Natural killer cell (primary cell): ENCODE measurements at regions of chr7 and their contacts with region 1.

Region 1: GRCh38 chr7:55309040-55309991 is 55.8 kb upstream of the LANCL2 start:
- DNase-seq: peak; percentile 71 to 87
- ATAC-seq: peak; percentile 78 to 89 (median 87)
- H3K4me3 ChIP-seq: no peak overlapping the region
- H3K4me3 Mint-ChIP-seq: peak overlapping the region; percentile 65
- H3K27ac ChIP-seq: peak overlapping the region; percentile 75
- H3K27ac Mint-ChIP-seq: peak overlapping the region; percentile 90 to 94
- H3K4me1 ChIP-seq: peaks cover 45% of the 10 kb centered on the region
- H3K4me1 Mint-ChIP-seq: peaks cover 49% of the 10 kb centered on the region in 2 donors
- H3K27me3 ChIP-seq: peaks cover 20% of the 10 kb centered on the region
- H3K27me3 Mint-ChIP-seq: peaks cover 47 to 55% of the 10 kb centered on the region in 2 donors
- CTCF ChIP-seq: no peak

Region 2: GRCh38 chr7:55018361-55019190 is 290.7 kb before region 1 on chr7 and contains the start of gene EGFR:
- intact Hi-C with region 1: no loop called
- DNase-seq: no peak
- ATAC-seq: no peak
- H3K4me3 ChIP-seq: no peak within 1 kb of the TSS
- H3K4me3 Mint-ChIP-seq: peak within 1 kb of the TSS; percentile 37
- H3K27ac ChIP-seq: no peak within 1 kb of the TSS
- H3K27ac Mint-ChIP-seq: no peak within 1 kb of the TSS
- H3K4me1 ChIP-seq: peaks cover 9% of the 10 kb centered on the region
- H3K4me1 Mint-ChIP-seq: no peaks in the 10 kb centered on the region
- H3K27me3 ChIP-seq: peaks cover 21% of the 10 kb centered on the region
- H3K27me3 Mint-ChIP-seq: peaks cover 38 to 48% of the 10 kb centered on the region in 2 donors
- CTCF ChIP-seq: no peak
- total RNA-seq, gene EGFR: not detected

Region 3: DNA sequence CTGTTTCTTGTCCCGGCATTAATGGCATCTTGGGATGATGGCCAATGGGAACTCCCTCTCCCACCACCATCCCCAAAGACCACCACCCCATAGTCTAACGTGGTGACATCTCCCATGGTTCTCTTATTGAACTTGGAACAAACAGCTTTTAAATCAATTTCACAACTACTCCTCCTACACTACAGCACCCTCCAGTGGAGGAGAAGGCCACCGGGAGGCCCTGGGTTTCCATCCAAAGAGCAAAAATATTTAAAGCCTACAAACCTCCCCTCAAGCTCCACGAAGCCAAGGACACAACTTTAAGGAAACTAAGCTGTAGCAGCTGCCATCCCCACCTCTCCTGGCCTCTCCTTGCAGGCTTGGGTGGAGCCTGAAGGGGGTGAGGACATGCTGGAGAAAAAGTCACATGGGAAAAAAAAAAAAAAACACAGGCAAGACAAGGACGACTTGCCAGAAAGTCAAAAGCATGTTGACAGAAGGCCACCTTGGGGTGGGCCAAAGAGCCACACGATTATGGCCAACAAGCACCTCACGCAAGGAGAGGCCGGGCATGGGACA is 38.2 kb before region 1 on chr7:
- intact Hi-C with region 1: no loop called
- DNase-seq: no peak
- ATAC-seq: no peak
- H3K4me3 ChIP-seq: no peak overlapping the region
- H3K4me3 Mint-ChIP-seq: no peak overlapping the region
- H3K27ac ChIP-seq: no peak overlapping the region
- H3K27ac Mint-ChIP-seq: no peak overlapping the region
- H3K4me1 ChIP-seq: no peaks in the 10 kb centered on the region
- H3K4me1 Mint-ChIP-seq: no peaks in the 10 kb centered on the region
- H3K27me3 ChIP-seq: no peaks in the 10 kb centered on the region
- H3K27me3 Mint-ChIP-seq: peaks cover 8 to 26% of the 10 kb centered on the region in 2 donors
- CTCF ChIP-seq: no peak

Region 4: GRCh38 chr7:55348499-55348898 is 39.2 kb after region 1 on chr7:
- intact Hi-C with region 1: no loop called
- DNase-seq: no peak
- ATAC-seq: no peak
- H3K4me3 ChIP-seq: no peak overlapping the region
- H3K4me3 Mint-ChIP-seq: no peak overlapping the region
- H3K27ac ChIP-seq: no peak overlapping the region
- H3K27ac Mint-ChIP-seq: no peak overlapping the region
- H3K4me1 ChIP-seq: no peaks in the 10 kb centered on the region
- H3K4me1 Mint-ChIP-seq: no peaks in the 10 kb centered on the region
- H3K27me3 ChIP-seq: peaks cover 2% of the 10 kb centered on the region
- H3K27me3 Mint-ChIP-seq: peaks cover 39 to 52% of the 10 kb centered on the region in 2 donors
- CTCF ChIP-seq: no peak

Region 5: DNA sequence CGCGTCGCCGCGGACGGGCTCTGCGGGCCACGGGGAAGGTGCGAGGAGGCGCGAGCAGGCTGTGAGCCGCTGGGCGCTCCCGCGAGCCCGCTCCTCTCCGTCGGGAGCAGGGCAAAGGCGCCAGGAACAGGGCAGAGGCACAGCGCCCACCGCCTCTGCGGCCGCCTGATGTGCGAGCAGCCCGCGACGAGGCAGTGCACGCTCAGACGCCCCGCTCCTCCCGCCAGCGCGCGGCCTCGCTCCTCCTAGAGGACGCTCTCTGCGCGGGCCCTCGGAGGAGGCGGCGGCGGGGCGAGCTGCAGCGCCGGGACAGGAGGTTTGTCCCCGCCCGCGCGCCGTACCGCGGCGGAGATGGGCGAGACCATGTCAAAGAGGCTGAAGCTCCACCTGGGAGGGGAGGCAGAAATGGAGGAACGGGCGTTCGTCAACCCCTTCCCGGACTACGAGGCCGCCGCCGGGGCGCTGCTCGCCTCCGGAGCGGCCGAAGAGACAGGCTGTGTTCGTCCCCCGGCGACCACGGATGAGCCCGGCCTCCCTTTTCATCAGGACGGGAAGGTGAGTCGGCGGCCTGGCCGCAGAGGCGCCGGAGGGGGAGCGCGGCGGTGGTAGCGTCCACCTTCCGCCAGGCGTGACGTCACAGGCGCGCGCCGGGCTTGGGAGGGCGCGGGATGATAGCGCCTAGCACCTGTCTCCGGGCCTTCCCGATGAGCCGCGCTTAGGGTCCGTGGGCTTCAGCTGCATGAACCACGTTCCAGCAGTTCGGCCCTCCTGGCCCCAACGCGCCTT is 56.6 kb after region 1 on chr7:
- intact Hi-C with region 1: loop called (anchors 1 kb)
- DNase-seq: peak; percentile 97 to 98
- ATAC-seq: peak; percentile 85 to 97 (median 88)
- H3K4me3 ChIP-seq: peak overlapping the region; percentile 89
- H3K4me3 Mint-ChIP-seq: peak overlapping the region; percentile 96
- H3K27ac ChIP-seq: peak overlapping the region; percentile 98
- H3K27ac Mint-ChIP-seq: peak overlapping the region; percentile 97 to 100
- H3K4me1 ChIP-seq: peaks cover 13% of the 10 kb centered on the region
- H3K4me1 Mint-ChIP-seq: peaks cover 20 to 32% of the 10 kb centered on the region in 2 donors
- H3K27me3 ChIP-seq: no peaks in the 10 kb centered on the region
- H3K27me3 Mint-ChIP-seq: peaks cover 9 to 11% of the 10 kb centered on the region in 2 donors
- CTCF ChIP-seq: peak; percentile 37

Region 6: GRCh38 chr7:55415173-55415778 is 106.0 kb after region 1 on chr7:
- intact Hi-C with region 1: loop called (anchors 1 kb)
- DNase-seq: peak; percentile 70 to 90
- ATAC-seq: peak; percentile 94 to 100 (median 99)
- H3K4me3 ChIP-seq: no peak overlapping the region
- H3K4me3 Mint-ChIP-seq: no peak overlapping the region
- H3K27ac ChIP-seq: no peak overlapping the region
- H3K27ac Mint-ChIP-seq: no peak overlapping the region
- H3K4me1 ChIP-seq: no peaks in the 10 kb centered on the region
- H3K4me1 Mint-ChIP-seq: peaks cover 0 to 4% of the 10 kb centered on the region in 2 donors
- H3K27me3 ChIP-seq: no peaks in the 10 kb centered on the region
- H3K27me3 Mint-ChIP-seq: no peaks in the 10 kb centered on the region
- CTCF ChIP-seq: peak; percentile 92

Region 7: GRCh38 chr7:55534175-55534915 is 225.0 kb after region 1 on chr7:
- intact Hi-C with region 1: loop called (anchors 1 kb)
- DNase-seq: peak; percentile 49 to 71
- ATAC-seq: peak; percentile 46 to 74 (median 67)
- H3K4me3 ChIP-seq: no peak overlapping the region
- H3K4me3 Mint-ChIP-seq: peak overlapping the region; percentile 80
- H3K27ac ChIP-seq: peak overlapping the region; percentile 89
- H3K27ac Mint-ChIP-seq: peak overlapping the region; percentile 89 to 90
- H3K4me1 ChIP-seq: peaks cover 65% of the 10 kb centered on the region
- H3K4me1 Mint-ChIP-seq: peaks cover 88 to 91% of the 10 kb centered on the region in 2 donors
- H3K27me3 ChIP-seq: no peaks in the 10 kb centered on the region
- H3K27me3 Mint-ChIP-seq: no peaks in the 10 kb centered on the region
- CTCF ChIP-seq: no peak

Region 8: DNA sequence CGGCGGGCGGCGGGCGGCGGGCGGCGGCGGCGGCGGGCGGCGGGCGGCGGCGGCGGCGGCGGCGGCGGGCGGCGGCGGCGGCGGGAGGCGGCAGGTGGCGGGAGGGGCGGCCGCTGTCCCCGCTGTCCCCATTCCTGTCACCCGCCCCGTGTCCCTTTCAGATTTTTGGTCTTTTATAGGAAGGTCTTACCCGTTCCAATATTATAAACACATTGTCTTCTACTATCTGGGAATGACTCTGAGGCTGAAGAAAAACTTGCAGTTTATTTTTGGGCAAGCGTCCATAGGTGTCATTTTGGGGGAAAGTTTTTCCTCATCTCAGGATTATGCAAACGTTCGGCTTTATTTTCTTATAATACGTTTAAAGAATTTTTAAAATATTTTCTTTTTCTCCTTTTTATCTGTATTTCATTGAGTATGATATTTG is 578.5 kb after region 1 on chr7:
- intact Hi-C with region 1: loop called (anchors 5 kb)
- DNase-seq: peak in 1 of 2 donors; percentile 37
- ATAC-seq: no peak
- H3K4me3 ChIP-seq: peak overlapping the region; percentile 35
- H3K4me3 Mint-ChIP-seq: peak overlapping the region; percentile 89
- H3K27ac ChIP-seq: no peak overlapping the region
- H3K27ac Mint-ChIP-seq: peak overlapping the region; percentile 95 to 97
- H3K4me1 ChIP-seq: peaks cover 5% of the 10 kb centered on the region
- H3K4me1 Mint-ChIP-seq: peaks cover 4 to 10% of the 10 kb centered on the region in 2 donors
- H3K27me3 ChIP-seq: no peaks in the 10 kb centered on the region
- H3K27me3 Mint-ChIP-seq: peaks cover 0 to 4% of the 10 kb centered on the region in 2 donors
- CTCF ChIP-seq: no peak